ENCODE measurements at regions of chr17 and their contacts with region 1.

Region 1: GRCh38 chr17:37744961-37745800 is at the start of gene HNF1B:
- DNase-seq: peak; percentile 46
- ATAC-seq: peak; percentile 49
- H3K4me3 Mint-ChIP-seq: peak within 1 kb of the TSS; percentile 10
- H3K27ac Mint-ChIP-seq: no peak within 1 kb of the TSS
- H3K4me1 Mint-ChIP-seq: peaks cover 19% of the 10 kb centered on the region
- H3K27me3 Mint-ChIP-seq: peaks cover 63% of the 10 kb centered on the region
- total RNA-seq, gene HNF1B: not detected

Region 2: DNA sequence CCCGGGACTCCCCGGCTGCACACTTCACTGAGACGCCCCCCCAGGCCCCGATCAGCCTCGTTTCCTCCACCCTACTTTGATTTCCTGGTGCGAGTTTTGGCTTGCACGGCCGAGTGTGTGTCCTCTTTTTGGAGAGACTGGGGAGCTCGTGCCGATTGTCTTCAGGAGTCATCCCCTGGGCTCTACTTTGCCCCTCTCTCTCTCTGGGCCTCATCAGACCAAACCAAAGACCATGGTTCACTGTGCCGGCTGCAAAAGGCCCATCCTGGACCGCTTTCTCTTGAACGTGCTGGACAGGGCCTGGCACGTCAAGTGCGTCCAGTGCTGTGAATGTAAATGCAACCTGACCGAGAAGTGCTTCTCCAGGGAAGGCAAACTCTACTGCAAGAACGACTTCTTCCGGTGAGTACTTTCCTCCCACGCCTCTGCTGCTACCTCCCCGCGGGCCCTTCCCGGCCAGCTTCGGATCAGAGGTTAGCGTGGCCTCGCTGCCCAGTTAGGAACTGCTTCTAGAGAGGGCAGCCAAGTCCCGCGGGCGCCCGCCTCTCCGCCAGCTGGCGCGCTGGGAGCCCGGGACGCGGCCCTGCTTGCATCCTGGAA is 807.1 kb before region 1 on chr17:
- CTCF ChIA-PET with region 1: no interaction called
- POLR2A ChIA-PET with region 1: no interaction called
- intact Hi-C with region 1: loop called in 1 of 2 experiments (anchors 5 kb)
- DNase-seq: peak; percentile 60
- ATAC-seq: peak; percentile 44
- H3K4me3 Mint-ChIP-seq: peak overlapping the region; percentile 60
- H3K27ac Mint-ChIP-seq: peak overlapping the region; percentile 60
- H3K4me1 Mint-ChIP-seq: peaks cover 65% of the 10 kb centered on the region
- H3K27me3 Mint-ChIP-seq: peaks cover 75% of the 10 kb centered on the region

Region 3: DNA sequence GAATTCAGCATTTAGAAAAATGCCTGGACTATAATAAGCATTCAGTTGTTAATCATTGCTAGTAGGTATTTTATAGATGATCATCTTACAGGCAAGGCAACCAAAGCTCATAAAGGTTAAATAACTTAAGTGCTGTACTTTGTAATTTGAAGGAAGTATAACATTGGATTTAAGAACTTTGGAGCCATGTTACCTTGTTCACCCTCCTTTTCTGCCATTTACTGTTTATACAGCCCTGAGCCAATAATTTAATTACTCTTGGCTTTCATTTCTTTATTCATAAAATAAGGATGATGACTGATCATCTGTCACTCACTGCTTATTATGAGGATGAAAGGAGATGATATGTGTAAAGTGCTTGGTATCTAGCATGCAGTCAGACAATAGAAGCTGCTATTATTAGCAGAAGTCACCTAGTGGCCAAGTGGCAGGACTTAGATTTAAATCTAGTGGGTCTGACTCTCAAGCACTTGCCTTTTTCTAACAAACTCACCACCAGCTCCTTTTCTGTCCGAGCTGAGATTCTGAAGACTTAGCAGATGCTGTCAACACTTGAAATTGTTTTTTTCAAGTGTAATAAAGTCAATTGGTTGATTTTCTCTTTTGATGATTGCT is 83.7 kb before region 1 on chr17:
- CTCF ChIA-PET with region 1: interaction called, 3 read pairs
- POLR2A ChIA-PET with region 1: no interaction called
- intact Hi-C with region 1: loop called in 1 of 2 experiments (anchors 5 kb)
- DNase-seq: no peak
- ATAC-seq: no peak
- H3K4me3 Mint-ChIP-seq: no peak overlapping the region
- H3K27ac Mint-ChIP-seq: no peak overlapping the region
- H3K4me1 Mint-ChIP-seq: no peaks in the 10 kb centered on the region
- H3K27me3 Mint-ChIP-seq: peaks cover 3% of the 10 kb centered on the region

Region 4: DNA sequence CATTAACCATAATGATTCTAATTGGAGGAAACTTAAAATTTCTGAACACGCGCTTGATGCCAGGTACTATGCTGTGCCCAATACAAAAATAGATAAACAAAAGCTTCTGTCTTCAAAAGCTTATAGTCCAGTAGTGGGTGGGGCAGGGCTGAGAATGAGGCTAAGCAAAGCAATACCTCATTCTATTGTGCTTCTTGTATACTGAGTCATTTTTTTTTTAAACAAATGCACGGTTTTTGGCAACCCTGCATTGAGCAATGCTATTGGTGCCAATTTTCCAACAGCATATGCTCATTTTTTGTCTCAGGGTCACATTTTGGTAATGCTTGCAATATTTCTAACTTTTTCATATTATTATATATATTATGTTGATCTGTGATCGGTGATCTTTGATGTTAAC is 34.4 kb after region 1 on chr17:
- CTCF ChIA-PET with region 1: no interaction called
- POLR2A ChIA-PET with region 1: interaction called, 4 read pairs
- intact Hi-C with region 1: loop called in 1 of 2 experiments (anchors 5 kb)
- DNase-seq: no peak
- ATAC-seq: no peak
- H3K4me3 Mint-ChIP-seq: no peak overlapping the region
- H3K27ac Mint-ChIP-seq: no peak overlapping the region
- H3K4me1 Mint-ChIP-seq: peaks cover 7% of the 10 kb centered on the region
- H3K27me3 Mint-ChIP-seq: peaks cover 17% of the 10 kb centered on the region

Region 5: GRCh38 chr17:37824534-37825485 is 79.6 kb after region 1 on chr17:
- CTCF ChIA-PET with region 1: no interaction called
- POLR2A ChIA-PET with region 1: no interaction called
- intact Hi-C with region 1: no loop called
- DNase-seq: no peak
- ATAC-seq: no peak
- H3K4me3 Mint-ChIP-seq: no peak overlapping the region
- H3K27ac Mint-ChIP-seq: no peak overlapping the region
- H3K4me1 Mint-ChIP-seq: peaks cover 13% of the 10 kb centered on the region
- H3K27me3 Mint-ChIP-seq: peaks cover 13% of the 10 kb centered on the region

Measured in activated CD4-positive, alpha-beta T cell treated with anti-CD3 and anti-CD28 coated beads for 36 hours (primary cell).